Left ventricle myocardium superior (tissue), 1 donor: ENCODE measurements at regions of chr11 and their contacts with region 1.

Region 1: GRCh38 chr11:86955361-86956120 is at the start of gene FZD4:
- DNase-seq: peak; percentile 97
- ATAC-seq: peak; percentile 91
- total RNA-seq, gene FZD4: 28.8 TPM

Region 2: GRCh38 chr11:86761978-86762377 is 193.6 kb before region 1 on chr11:
- intact Hi-C with region 1: no loop called
- DNase-seq: no peak
- ATAC-seq: no peak

Region 3: GRCh38 chr11:86978756-86979608 is 23.4 kb after region 1 on chr11:
- intact Hi-C with region 1: loop called (anchors 2 kb)
- DNase-seq: no peak
- ATAC-seq: peak; percentile 61

Region 4: GRCh38 chr11:87037450-87038234 is 82.1 kb after region 1 on chr11 and contains the start of gene TMEM135:
- intact Hi-C with region 1: loop called (anchors 10 kb)
- DNase-seq: peak; percentile 97
- ATAC-seq: peak; percentile 98
- total RNA-seq, gene TMEM135: 20.1 TPM